CD8-positive, alpha-beta T cell (primary cell): ENCODE measurements at regions of chr16 and their contacts with region 1.

Region 1: GRCh38 chr16:81006814-81007696 is at the starts of genes CENPN and CMC2:
- DNase-seq: peak; percentile 95 to 99 (median 98)
- ATAC-seq: peak; percentile 78
- H3K4me3 ChIP-seq: peak within 1 kb of the TSS; percentile 86
- H3K4me3 Mint-ChIP-seq: peak within 1 kb of the TSS; percentile 99
- H3K27ac ChIP-seq: peak within 1 kb of the TSS; percentile 93 to 99
- H3K27ac Mint-ChIP-seq: peak within 1 kb of the TSS; percentile 100
- H3K4me1 ChIP-seq: peaks cover 22% of the 10 kb centered on the region
- H3K4me1 Mint-ChIP-seq: peaks cover 38% of the 10 kb centered on the region
- H3K27me3 ChIP-seq: no peaks in the 10 kb centered on the region
- H3K27me3 Mint-ChIP-seq: no peaks in the 10 kb centered on the region
- CTCF ChIP-seq: no peak
- total RNA-seq, gene CENPN: 16.0 to 16.9 TPM
- total RNA-seq, gene CMC2: 84.0 to 86.3 TPM

Region 2: GRCh38 chr16:81035398-81035974 is 28.4 kb after region 1 on chr16 and contains the start of gene ATMIN:
- CTCF ChIA-PET with region 1: interaction called, 59 read pairs
- POLR2A ChIA-PET with region 1: interaction called, 34 read pairs
- intact Hi-C with region 1: loop called (anchors 1 kb)
- DNase-seq: peak; percentile 79 to 94 (median 90)
- ATAC-seq: peak; percentile 97
- H3K4me3 ChIP-seq: peak within 1 kb of the TSS; percentile 47 to 59
- H3K4me3 Mint-ChIP-seq: peak within 1 kb of the TSS; percentile 87
- H3K27ac ChIP-seq: peak within 1 kb of the TSS in 1 of 2 experiments; percentile 34
- H3K27ac Mint-ChIP-seq: peak within 1 kb of the TSS; percentile 82
- H3K4me1 ChIP-seq: peaks cover 20% of the 10 kb centered on the region
- H3K4me1 Mint-ChIP-seq: peaks cover 34% of the 10 kb centered on the region
- H3K27me3 ChIP-seq: no peaks in the 10 kb centered on the region
- H3K27me3 Mint-ChIP-seq: no peaks in the 10 kb centered on the region
- CTCF ChIP-seq: peak; percentile 99
- total RNA-seq, gene ATMIN: 32.2 to 35.1 TPM

Region 3: DNA sequence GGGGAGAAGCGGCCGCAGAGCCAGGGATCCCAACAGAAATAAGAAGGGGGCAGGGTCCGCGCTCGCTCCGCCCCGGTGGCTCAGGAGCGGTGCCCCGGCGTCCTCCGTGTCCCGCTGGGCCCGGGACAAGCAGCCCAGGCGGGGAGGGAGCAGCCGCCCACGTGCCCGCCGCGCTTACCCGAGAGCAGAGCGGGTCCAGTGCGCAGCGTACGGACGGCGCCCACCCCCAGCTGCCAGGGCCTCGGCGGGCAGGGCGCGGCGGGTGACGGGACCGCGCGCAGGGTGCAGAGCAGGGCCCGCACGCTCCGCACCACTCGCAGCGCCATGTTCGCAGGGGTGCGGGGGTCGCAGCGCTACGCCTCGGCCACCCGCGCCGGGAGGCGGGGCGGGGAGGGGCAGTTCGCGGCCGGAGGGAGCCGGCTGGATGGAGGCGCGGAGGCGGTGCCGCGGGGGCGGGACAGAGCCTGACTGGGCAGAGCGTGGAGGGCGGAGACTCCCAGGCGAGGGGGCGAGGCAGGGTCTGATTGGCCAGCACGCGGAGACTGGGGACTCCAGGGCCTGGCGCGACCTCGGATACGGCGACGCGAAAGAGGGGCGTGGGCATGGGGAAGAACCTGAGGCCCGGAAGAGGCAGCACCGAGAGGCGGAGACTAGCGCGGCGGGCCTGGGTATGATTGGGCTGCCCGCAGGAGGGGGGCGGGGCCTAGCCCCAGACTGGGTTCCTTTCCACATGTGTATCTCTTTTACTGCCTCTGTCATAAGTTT is 89.1 kb after region 1 on chr16 and contains the start of gene GCSH:
- CTCF ChIA-PET with region 1: interaction called, 6 read pairs
- POLR2A ChIA-PET with region 1: no interaction called
- intact Hi-C with region 1: loop called (anchors 1 kb)
- DNase-seq: peak; percentile 94 to 100 (median 98)
- ATAC-seq: peak; percentile 97
- H3K4me3 ChIP-seq: peak within 1 kb of the TSS; percentile 59 to 71
- H3K4me3 Mint-ChIP-seq: peak within 1 kb of the TSS; percentile 88
- H3K27ac ChIP-seq: peak within 1 kb of the TSS; percentile 43 to 58
- H3K27ac Mint-ChIP-seq: peak within 1 kb of the TSS; percentile 49
- H3K4me1 ChIP-seq: peaks cover 7% of the 10 kb centered on the region
- H3K4me1 Mint-ChIP-seq: peaks cover 14% of the 10 kb centered on the region
- H3K27me3 ChIP-seq: no peaks in the 10 kb centered on the region
- H3K27me3 Mint-ChIP-seq: no peaks in the 10 kb centered on the region
- CTCF ChIP-seq: no peak
- total RNA-seq, gene GCSH: 2.5 to 2.8 TPM

Region 4: DNA sequence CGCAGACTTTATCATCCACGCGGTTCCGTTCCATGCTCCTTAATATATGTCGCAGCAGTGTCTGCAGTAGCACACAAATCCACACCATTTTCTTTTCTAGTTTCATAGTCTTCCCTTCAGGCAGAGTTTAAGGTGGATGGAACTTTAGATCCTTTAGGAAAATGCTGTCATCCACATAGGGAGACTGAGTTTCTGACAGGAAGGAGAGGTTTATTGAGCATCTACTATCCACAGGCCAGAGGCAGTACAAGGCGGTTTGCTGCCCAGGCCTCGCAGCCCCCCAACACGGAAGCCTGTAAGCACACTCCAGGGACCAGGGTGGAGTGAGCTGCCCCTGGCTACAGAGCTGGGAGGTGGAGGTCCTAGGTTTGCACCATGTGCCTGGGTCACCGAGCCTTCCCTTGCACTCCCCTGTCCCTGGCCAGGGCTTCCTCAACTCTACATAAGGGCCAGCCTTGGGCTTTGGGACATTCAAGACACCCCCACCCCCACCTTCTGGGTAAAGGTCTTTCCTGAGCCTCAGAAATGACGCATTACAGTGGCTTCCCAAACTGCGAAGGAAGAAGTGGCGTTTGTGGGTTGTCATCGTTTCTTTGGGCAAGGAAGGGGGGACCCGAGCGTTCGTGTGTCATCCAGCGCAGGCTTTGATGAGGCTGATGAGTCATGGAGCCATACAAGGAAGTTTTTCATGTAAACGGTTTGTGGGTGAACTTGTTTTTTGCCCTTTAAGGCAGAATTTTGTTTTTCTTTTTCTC is 625.5 kb after region 1 on chr16:
- CTCF ChIA-PET with region 1: no interaction called
- POLR2A ChIA-PET with region 1: no interaction called
- intact Hi-C with region 1: loop called (anchors 5 to 10 kb)
- DNase-seq: peak; percentile 60 to 95 (median 81)
- ATAC-seq: peak; percentile 84
- H3K4me3 ChIP-seq: no peak overlapping the region
- H3K4me3 Mint-ChIP-seq: peak overlapping the region; percentile 65
- H3K27ac ChIP-seq: peak overlapping the region; percentile 39 to 77
- H3K27ac Mint-ChIP-seq: peak overlapping the region; percentile 96
- H3K4me1 ChIP-seq: peaks cover 27% of the 10 kb centered on the region
- H3K4me1 Mint-ChIP-seq: peaks cover 55% of the 10 kb centered on the region
- H3K27me3 ChIP-seq: no peaks in the 10 kb centered on the region
- H3K27me3 Mint-ChIP-seq: no peaks in the 10 kb centered on the region
- CTCF ChIP-seq: no peak

Region 5: DNA sequence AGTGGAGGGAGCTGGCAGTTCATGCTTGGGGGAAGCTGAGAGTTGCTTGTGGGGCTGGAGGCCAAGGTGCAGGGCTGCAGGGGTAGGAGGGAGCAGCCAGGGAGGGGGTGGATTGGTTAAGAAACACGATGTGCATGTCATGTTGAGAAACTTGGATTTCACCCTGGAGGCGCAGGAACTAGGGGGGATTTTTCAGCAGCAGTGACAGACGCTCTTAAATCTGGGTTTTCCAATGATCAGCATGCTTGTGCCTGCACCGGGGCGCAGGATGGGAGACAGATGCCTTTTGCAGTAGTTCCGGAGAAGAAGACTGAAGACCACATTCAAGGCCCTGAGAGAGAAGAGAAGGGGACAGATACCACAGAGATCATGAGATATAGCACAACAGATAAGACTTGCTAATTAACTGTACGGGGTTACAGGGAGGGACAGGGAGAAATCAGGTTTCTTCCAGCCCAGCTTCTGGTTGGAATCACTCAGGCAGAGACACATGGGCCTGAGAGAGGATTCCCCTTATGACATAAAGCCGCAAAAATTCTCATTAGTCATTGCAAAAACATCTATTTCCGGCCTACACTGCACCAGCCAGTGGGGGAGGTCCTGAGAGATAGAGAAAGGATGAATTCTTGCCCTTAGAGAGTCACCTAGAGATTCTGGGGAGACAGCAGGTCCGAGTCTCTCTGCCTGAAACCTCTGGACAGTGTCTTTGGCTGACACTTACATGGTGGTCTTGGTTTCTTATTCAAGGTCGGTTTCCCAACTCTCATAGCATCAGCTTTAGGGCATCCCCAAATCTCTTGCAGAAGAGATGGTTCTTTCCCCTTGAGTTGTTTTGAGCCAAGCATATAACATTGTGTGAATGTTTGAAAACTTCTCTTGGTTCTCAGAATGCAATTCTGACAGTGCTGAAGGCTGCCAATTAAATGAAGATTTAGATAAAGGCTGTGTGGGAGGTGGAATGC is 1646.8 kb after region 1 on chr16:
- CTCF ChIA-PET with region 1: no interaction called
- POLR2A ChIA-PET with region 1: no interaction called
- intact Hi-C with region 1: loop called in 1 of 2 experiments (anchors 10 kb)
- DNase-seq: peak in 8 of 9 experiments; percentile 1 to 89 (median 34)
- ATAC-seq: peak; percentile 62
- H3K4me3 ChIP-seq: no peak overlapping the region
- H3K4me3 Mint-ChIP-seq: peak overlapping the region; percentile 58
- H3K27ac ChIP-seq: peak overlapping the region in 1 of 2 experiments; percentile 91
- H3K27ac Mint-ChIP-seq: peak overlapping the region; percentile 90
- H3K4me1 ChIP-seq: peaks cover 63% of the 10 kb centered on the region
- H3K4me1 Mint-ChIP-seq: peaks cover 88% of the 10 kb centered on the region
- H3K27me3 ChIP-seq: no peaks in the 10 kb centered on the region
- H3K27me3 Mint-ChIP-seq: no peaks in the 10 kb centered on the region
- CTCF ChIP-seq: no peak